ENCODE measurements at regions of chr3 and their contacts with region 1.

Region 1: GRCh38 chr3:189288348-189289235 is 116.8 kb downstream of the TPRG1 start:
- DNase-seq: peak; percentile 41
- H3K4me3 ChIP-seq: peak overlapping the region; percentile 35
- H3K27ac ChIP-seq: peak overlapping the region; percentile 56
- H3K4me1 ChIP-seq: peaks cover 49% of the 10 kb centered on the region
- CTCF ChIP-seq: no peak

Region 2: DNA sequence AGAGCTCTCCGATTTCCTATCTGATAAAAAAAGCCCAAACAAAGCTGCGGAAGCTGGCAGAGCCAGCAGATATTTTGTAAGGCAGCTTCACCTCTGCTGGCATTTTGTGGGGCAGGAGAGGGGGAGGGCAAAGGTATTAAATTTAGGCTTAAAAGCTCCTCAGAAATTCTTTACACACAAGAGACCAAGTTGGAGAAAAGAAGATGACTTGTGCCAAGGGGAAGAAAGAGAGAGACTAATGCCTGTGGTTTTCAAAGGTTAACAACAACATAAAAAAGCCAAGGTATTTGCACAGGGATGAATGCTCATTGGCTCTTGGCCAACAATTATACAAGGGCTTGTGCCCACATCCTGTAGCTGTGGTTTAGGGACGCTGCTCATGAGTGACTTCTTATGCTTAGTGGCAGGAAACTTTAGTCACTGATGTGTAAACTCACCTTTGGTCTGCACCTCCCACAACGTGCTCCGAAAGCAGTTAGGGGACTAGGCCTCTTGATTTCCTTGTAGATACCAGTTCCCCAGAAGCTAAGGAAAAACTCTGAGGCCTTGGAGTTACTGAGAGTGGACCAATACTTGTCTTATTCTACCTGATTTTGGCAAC is 36.0 kb after region 1 on chr3:
- CTCF ChIA-PET with region 1: no interaction called
- POLR2A ChIA-PET with region 1: interaction called, 5 read pairs
- intact Hi-C with region 1: loop called (anchors 1 kb)
- DNase-seq: peak; percentile 98
- H3K4me3 ChIP-seq: peak overlapping the region; percentile 48
- H3K27ac ChIP-seq: peak overlapping the region; percentile 49
- H3K4me1 ChIP-seq: peaks cover 26% of the 10 kb centered on the region
- CTCF ChIP-seq: no peak

Region 3: DNA sequence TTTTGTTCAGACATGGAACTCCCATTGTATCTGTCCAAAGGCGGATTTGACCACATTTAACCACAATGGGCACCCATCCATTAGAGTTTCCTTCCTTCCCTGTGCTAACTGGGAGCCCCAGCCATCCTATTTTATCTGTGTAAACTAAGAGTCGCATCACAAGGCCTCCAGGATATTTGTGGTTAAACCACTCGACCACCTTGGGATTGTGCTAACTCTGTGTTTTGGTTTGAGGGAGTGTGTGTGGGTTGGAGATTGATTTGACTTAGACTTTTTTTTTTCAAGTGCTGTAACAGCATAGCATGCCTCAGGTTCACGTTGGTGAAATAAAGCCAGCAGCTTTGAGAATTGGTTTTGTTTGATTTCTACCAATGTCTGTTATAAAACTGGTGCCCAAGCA is 242.2 kb after region 1 on chr3:
- CTCF ChIA-PET with region 1: no interaction called
- POLR2A ChIA-PET with region 1: no interaction called
- intact Hi-C with region 1: no loop called
- DNase-seq: no peak
- H3K4me3 ChIP-seq: no peak overlapping the region
- H3K27ac ChIP-seq: no peak overlapping the region
- H3K4me1 ChIP-seq: no peaks in the 10 kb centered on the region
- CTCF ChIP-seq: no peak